ENCODE measurements at regions of chr18 and their contacts with region 1.

Region 1: GRCh38 chr18:8982416-8983184 is 119.9 kb upstream of the NDUFV2 start:
- DNase-seq: peak; percentile 92
- H3K4me3 ChIP-seq: no peak overlapping the region
- CTCF ChIP-seq: peak; percentile 62

Region 2: GRCh38 chr18:8654503-8655451 is 327.8 kb before region 1 on chr18:
- CTCF ChIA-PET with region 1: interaction called, 121 read pairs
- POLR2A ChIA-PET with region 1: no interaction called
- DNase-seq: no peak
- H3K4me3 ChIP-seq: no peak overlapping the region
- CTCF ChIP-seq: peak; percentile 30

Region 3: GRCh38 chr18:8704361-8705279 is 278.0 kb before region 1 on chr18:
- CTCF ChIA-PET with region 1: interaction called, 35 read pairs
- POLR2A ChIA-PET with region 1: interaction called, 4 read pairs
- DNase-seq: peak; percentile 76
- H3K4me3 ChIP-seq: peak overlapping the region; percentile 86
- CTCF ChIP-seq: no peak

Region 4: DNA sequence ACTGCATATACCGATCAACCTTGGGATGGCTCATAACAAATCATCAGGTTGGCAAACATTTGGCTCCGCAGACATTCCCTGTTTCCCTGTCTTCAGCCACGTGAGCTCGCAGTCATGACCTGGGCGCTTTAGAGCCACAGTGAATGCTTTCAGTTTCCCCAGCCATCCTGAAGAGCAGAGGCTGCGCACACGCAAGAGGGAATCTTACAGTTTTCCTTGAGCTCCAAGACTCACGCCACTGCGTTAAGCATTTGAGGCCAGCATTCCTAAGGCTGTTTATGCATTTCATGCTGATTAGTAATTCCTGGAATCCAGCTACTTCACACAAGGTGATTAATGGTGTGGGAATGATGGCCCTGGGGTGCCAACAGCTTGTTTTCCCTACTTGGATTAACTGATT is 182.2 kb before region 1 on chr18:
- CTCF ChIA-PET with region 1: interaction called, 35 read pairs
- POLR2A ChIA-PET with region 1: interaction called, 6 read pairs
- DNase-seq: peak; percentile 99
- H3K4me3 ChIP-seq: no peak overlapping the region
- CTCF ChIP-seq: no peak

Region 5: GRCh38 chr18:8830067-8831060 is 152.2 kb before region 1 on chr18:
- CTCF ChIA-PET with region 1: interaction called, 14 read pairs
- POLR2A ChIA-PET with region 1: no interaction called
- DNase-seq: no peak
- H3K4me3 ChIP-seq: no peak overlapping the region
- CTCF ChIP-seq: no peak

Region 6: DNA sequence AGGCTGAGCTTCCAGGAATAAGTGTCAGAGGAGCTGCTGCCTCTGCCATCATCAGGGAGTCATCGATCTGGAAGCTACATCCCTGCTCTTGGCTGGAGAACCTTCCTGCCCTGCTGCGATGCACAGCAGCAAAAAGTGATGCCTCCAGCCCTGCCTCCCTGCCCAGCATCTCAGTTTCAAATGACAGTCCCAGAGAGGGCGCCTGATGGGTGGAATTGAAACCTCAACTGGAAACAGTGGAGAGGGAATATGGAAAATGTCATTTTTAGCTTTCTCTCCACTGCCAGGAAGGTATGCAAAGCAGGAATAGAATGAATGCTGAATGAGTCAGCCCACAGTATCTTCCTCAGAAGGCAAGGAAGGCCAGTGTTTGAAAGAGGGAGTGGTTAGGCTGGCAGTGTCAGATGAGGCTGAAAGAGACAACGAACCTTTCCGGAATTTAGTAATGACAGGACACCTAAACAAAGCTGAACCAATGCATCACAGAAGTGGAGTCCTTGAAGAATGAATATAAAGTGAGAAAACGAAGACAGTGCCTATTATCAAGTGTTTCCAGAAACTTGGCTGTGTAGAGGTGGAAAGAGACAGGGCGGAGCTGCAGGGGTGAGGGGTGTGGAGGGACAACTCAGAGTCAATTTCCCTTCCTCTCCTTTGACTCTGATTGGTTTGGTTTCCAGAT is 34.0 kb before region 1 on chr18:
- CTCF ChIA-PET with region 1: interaction called, 11 read pairs
- POLR2A ChIA-PET with region 1: interaction called, 5 read pairs
- DNase-seq: no peak
- H3K4me3 ChIP-seq: peak overlapping the region; percentile 54
- CTCF ChIP-seq: peak; percentile 15

Region 7: DNA sequence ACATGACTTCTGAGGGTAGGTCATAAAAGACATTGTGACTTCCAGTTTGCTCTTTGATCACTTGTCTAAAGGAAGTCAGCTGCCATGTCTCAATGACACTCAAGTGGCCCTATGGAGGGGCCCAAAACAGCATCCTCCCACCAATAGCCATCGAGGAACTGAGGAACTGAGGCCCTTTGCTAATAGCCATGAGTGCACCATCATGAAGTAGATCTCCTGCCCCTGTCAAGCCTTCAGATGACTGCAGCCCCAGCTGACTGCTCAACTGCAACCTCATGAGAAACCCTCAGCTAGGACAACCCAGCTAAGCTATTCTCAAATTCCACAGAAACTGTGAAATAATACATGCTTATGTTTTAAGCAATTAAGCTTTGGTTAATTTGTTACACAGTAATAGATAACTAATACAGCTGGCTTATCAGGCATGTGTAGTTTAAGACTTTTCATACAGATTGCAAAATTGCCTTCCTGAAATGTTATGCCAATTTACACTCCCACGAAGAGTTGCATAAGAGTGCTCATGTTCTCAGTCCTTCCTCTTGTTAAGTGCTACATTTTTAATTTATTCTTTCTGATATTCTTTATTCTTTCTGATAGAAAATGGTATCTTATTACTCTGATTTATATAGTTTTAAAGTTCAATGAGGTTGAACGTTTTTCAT is 14.3 kb after region 1 on chr18:
- CTCF ChIA-PET with region 1: interaction called, 14 read pairs
- POLR2A ChIA-PET with region 1: no interaction called
- DNase-seq: no peak
- H3K4me3 ChIP-seq: no peak overlapping the region
- CTCF ChIP-seq: no peak

Region 8: DNA sequence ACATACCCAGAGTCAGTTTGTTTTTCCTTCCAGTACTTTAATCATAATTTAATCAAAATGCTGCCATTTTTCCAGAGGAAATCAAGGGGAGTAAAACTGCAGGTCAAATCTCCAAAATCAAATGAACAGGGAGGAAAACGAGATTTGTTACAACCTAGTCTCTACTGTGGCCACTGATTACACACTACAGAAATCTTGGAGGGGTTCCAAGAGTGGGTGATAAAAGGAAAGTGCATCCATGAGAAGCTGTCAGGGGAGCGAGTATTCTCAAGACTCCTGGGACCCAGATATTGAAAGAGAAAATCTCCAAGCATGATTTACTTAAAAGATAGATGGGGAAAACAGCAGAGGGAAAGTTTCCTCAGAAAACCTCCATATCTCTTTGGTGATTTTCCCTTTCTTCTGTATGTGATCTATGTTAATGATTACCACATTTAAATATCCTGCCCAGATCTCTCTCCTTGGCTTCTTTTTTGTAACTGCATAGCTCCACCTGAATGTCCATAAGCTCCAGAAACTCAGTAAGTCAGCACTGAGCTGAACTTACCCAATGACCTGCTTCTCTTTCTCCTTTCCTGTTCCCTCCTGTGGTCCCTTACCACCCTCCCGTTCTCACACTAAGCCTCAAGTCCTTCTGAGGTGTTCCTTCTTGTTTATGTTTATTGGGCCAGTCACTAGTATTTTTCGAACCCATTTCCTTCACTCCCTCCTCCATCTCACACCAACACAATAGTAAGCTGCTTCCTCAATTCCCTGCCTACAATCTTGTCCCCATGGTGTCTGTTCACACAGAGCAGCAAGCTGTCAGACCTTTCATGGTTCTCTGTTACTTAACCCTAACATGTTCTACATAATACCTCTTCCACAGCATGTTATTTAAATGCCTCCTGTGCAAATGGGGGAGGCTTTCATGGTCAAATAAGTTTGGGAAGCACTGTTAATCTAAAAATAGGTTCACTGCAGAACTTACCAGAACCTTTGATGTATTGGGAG is 278.1 kb after region 1 on chr18:
- CTCF ChIA-PET with region 1: no interaction called
- POLR2A ChIA-PET with region 1: no interaction called
- DNase-seq: no peak
- H3K4me3 ChIP-seq: no peak overlapping the region
- CTCF ChIP-seq: no peak

Measured in AG04449 (cell line).